ENCODE measurements at regions of chr20 and their contacts with region 1.

Region 1: DNA sequence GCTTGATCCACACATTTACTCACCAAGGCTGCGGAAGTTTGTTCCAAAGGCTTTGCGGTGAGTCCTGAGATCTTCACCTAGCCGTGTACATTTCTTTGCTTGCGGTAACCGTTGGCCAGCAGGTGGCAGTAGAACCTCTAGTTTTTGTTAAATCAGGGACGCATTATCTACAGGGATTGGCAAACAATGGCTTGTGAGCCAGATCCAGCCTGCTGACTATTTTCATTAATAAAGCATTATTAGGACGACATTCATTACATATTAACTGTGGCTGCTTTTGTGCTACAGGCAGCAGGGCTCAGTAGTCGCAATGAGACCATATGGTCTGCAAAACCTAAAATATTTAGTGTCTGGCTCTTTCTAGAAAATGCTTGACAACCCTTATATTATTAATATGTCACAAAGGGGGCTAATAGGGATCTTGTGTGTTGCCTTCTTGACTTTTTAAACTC is 174.1 kb downstream of the DOK5 start:
- DNase-seq: peak; percentile 56 to 81 (median 68)
- ATAC-seq: peak in 3 of 4 donors; percentile 67 to 78 (median 74)
- H3K4me3 ChIP-seq: no peak overlapping the region
- H3K27ac ChIP-seq: no peak overlapping the region
- H3K4me1 ChIP-seq: peaks cover 0 to 7% (median 0%) of the 10 kb centered on the region in 12 donors
- H3K27me3 ChIP-seq: no peaks in the 10 kb centered on the region
- CTCF ChIP-seq: peak; percentile 64 to 87 (median 75)
- POLR2A ChIP-seq: no peak

Region 2: DNA sequence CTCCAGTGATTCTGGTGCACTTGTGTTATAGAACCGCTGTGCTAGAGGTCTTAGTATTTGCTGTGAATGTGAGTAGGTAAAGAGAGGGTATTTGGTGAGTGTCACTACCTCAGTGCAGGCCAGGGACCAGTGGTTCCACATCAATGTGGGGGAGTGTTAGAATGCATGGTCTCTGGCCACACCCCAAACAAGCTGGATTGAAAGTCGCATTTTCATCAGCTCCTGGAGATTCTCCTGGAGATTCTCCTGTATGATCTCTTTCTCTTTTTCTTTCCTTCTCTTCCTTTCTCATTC is 552.4 kb before region 1 on chr20:
- intact Hi-C with region 1: loop called (anchors 2 to 5 kb)
- DNase-seq: no peak
- ATAC-seq: no peak
- H3K4me3 ChIP-seq: no peak overlapping the region
- H3K27ac ChIP-seq: no peak overlapping the region
- H3K4me1 ChIP-seq: no peaks in the 10 kb centered on the region
- H3K27me3 ChIP-seq: peaks cover 0 to 20% (median 0%) of the 10 kb centered on the region in 9 donors
- CTCF ChIP-seq: no peak
- POLR2A ChIP-seq: no peak

Region 3: GRCh38 chr20:54199721-54200176 is 449.8 kb before region 1 on chr20:
- intact Hi-C with region 1: loop called in 1 of 10 experiments (anchors 5 kb)
- DNase-seq: peak; percentile 37 to 75 (median 58)
- ATAC-seq: peak in 3 of 4 donors; percentile 55 to 74 (median 68)
- H3K4me3 ChIP-seq: no peak overlapping the region
- H3K27ac ChIP-seq: no peak overlapping the region
- H3K4me1 ChIP-seq: peaks cover 0 to 4% (median 0%) of the 10 kb centered on the region in 12 donors
- H3K27me3 ChIP-seq: peaks cover 0 to 6% (median 0%) of the 10 kb centered on the region in 9 donors
- CTCF ChIP-seq: peak; percentile 82 to 93 (median 87)
- POLR2A ChIP-seq: no peak

Region 4: DNA sequence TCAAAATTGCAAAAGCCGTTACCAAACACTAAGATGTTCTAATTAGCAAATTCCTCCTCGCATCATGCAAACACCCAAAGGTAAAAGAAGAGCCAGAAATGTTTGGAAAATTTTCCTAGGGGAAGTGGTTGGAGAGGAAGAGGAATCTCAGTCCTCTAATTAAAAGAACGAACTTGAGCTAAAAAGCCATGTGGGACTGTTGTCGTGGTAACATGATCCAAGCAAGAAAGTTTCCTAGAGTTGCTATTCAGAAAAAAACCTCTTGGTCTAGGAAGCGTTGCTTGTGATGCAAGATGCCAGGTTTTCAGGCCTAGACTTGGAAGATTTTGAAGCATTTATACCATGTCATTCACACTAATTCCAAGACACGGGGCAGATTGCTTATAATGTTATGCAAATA is 281.0 kb before region 1 on chr20:
- intact Hi-C with region 1: loop called in 1 of 10 experiments (anchors 10 kb)
- DNase-seq: no peak
- ATAC-seq: no peak
- H3K4me3 ChIP-seq: no peak overlapping the region
- H3K27ac ChIP-seq: no peak overlapping the region
- H3K4me1 ChIP-seq: no peaks in the 10 kb centered on the region
- H3K27me3 ChIP-seq: no peaks in the 10 kb centered on the region
- CTCF ChIP-seq: no peak
- POLR2A ChIP-seq: no peak

Region 5: GRCh38 chr20:54475334-54476168 is 174.0 kb before region 1 on chr20 and contains the start of gene DOK5:
- intact Hi-C with region 1: loop called in 1 of 10 experiments (anchors 10 kb)
- DNase-seq: peak in 4 of 5 donors; percentile 53 to 68 (median 61)
- ATAC-seq: peak; percentile 70 to 93 (median 90)
- H3K4me3 ChIP-seq: peak within 1 kb of the TSS; percentile 45 to 92 (median 72)
- H3K27ac ChIP-seq: peak within 1 kb of the TSS in 10 of 12 donors; percentile 24 to 83 (median 56)
- H3K4me1 ChIP-seq: peaks cover 0 to 21% (median 6%) of the 10 kb centered on the region in 12 donors
- H3K27me3 ChIP-seq: peaks cover 0 to 31% (median 0%) of the 10 kb centered on the region in 9 donors
- CTCF ChIP-seq: peak in 2 of 12 donors; percentile 10 to 17
- POLR2A ChIP-seq: no peak
- total RNA-seq, gene DOK5: 3.4 to 23.5 (median 7.0) TPM

Region 6: DNA sequence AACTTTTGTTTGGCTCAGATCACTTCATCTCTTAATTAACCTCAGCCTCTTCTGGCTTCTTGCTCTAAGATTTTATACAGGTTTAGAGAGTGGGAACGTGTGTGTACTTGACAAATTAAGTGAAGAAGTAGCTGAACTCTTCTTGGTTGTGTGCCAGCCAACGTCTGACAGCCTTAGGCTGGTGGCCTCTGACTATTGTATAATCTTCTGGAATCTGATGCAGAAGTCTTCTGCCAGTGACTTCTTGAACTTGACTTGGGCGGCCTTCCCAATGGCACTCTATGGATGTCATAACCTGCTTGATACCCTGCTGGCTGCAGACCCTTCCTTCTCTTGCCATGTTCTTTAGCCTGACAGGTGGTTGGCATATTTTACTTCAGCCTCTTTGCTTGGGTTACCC is 486.4 kb after region 1 on chr20:
- intact Hi-C with region 1: no loop called
- DNase-seq: no peak
- ATAC-seq: no peak
- H3K4me3 ChIP-seq: no peak overlapping the region
- H3K27ac ChIP-seq: no peak overlapping the region
- H3K4me1 ChIP-seq: no peaks in the 10 kb centered on the region
- H3K27me3 ChIP-seq: no peaks in the 10 kb centered on the region
- CTCF ChIP-seq: no peak
- POLR2A ChIP-seq: no peak

Measured in heart left ventricle (tissue), 16 donors.